Posterior cingulate gyrus (tissue), 11 donors: ENCODE measurements at regions of chr7 and their contacts with region 1.

Region 1: GRCh38 chr7:155815332-155816191 is 3.3 kb upstream of the SHH start:
- DNase-seq: peak in 8 of 10 donors; percentile 44 to 94 (median 60)

Region 2: DNA sequence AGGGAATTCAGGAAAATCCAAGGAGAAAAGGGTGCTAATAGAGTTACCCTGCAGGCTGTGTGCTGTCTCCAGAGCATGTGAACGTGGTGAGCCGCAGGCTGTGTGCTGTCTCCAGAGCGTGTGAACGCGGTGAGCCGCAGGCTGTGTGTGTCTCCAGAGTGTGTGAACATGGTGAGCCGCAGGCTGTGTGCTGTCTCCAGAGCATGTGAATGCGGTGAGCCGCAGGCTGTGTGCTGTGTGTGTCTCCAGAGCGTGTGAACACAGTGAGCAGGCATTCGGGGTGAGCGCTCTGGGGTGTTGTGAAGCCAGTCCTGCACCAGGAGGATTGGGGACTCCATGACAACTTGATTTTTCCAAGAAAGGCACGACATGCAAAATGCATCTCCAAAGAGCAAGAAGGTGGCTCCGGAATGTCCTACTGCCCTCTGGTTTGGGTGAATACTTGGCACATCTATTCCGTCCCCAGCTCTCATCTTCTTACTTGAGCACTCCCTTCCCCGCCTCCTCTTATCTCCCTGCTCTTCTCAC is 404.6 kb after region 1 on chr7:
- intact Hi-C with region 1: no loop called
- DNase-seq: no peak

Region 3: GRCh38 chr7:156473476-156474240 is 658.1 kb after region 1 on chr7:
- intact Hi-C with region 1: loop called (anchors 5 kb)
- DNase-seq: peak; percentile 32 to 94 (median 58)